OCI-LY7 (cell line): ENCODE measurements at regions of chr11 and their contacts with region 1.

Region 1: GRCh38 chr11:22304337-22304961 is 33.7 kb upstream of the SLC17A6 start:
- DNase-seq: peak; percentile 47
- H3K4me3 ChIP-seq: no peak overlapping the region
- H3K27ac ChIP-seq: no peak overlapping the region
- H3K4me1 ChIP-seq: no peaks in the 10 kb centered on the region
- CTCF ChIP-seq: peak; percentile 86

Region 2: DNA sequence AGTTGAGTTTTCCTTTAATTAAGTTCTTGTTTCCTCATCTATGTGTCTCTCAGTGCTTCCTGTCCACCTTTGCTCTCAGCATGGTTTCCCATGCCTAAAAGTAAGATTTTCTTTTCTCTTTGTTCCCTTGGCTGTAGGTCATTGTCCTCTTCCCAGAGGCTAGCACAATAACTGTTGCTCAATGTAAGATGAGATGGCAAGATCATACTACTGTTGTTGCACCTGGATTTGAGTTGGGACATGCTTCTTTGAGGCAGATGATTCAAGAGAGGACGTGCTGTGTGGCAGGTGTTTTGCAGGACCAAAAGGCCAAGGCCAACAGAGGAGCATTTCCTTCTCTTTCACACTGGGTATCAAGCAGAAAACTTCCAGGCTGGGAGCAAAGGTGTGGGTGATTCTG is 1646.3 kb before region 1 on chr11:
- CTCF ChIA-PET with region 1: no interaction called
- POLR2A ChIA-PET with region 1: no interaction called
- intact Hi-C with region 1: loop called (anchors 10 kb)
- DNase-seq: no peak
- H3K4me3 ChIP-seq: no peak overlapping the region
- H3K27ac ChIP-seq: no peak overlapping the region
- H3K4me1 ChIP-seq: no peaks in the 10 kb centered on the region
- CTCF ChIP-seq: no peak

Region 3: GRCh38 chr11:22244986-22245592 is 59.4 kb before region 1 on chr11:
- CTCF ChIA-PET with region 1: no interaction called
- POLR2A ChIA-PET with region 1: no interaction called
- intact Hi-C with region 1: loop called (anchors 5 kb)
- DNase-seq: peak; percentile 44
- H3K4me3 ChIP-seq: no peak overlapping the region
- H3K27ac ChIP-seq: no peak overlapping the region
- H3K4me1 ChIP-seq: no peaks in the 10 kb centered on the region
- CTCF ChIP-seq: peak; percentile 79